ENCODE measurements at regions of chr1 and their contacts with region 1.

Region 1: DNA sequence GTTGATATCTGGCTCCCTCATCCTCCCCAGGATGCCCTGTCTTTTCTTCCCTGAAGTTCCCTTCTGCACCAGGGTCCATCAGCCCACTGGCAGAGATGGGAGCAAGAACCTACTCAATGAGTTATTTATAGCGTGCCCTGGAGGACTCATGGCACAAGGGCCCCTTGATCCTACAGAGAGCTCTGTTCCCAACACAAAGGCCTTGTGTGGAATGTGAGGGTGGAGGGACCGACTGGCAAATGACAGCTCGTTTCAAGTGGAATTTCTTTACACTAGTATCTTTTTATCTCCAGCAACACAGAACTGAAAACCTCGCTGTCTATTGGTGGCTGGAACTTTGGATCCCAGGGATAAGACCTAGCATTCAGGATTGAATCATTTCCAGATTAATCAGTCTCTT is 22.4 kb downstream of the CHI3L2 start:
- DNase-seq: no peak
- H3K4me3 ChIP-seq: no peak overlapping the region
- H3K27ac ChIP-seq: no peak overlapping the region
- H3K4me1 ChIP-seq: no peaks in the 10 kb centered on the region
- H3K27me3 ChIP-seq: no peaks in the 10 kb centered on the region
- CTCF ChIP-seq: no peak
- POLR2A ChIP-seq: no peak

Region 2: DNA sequence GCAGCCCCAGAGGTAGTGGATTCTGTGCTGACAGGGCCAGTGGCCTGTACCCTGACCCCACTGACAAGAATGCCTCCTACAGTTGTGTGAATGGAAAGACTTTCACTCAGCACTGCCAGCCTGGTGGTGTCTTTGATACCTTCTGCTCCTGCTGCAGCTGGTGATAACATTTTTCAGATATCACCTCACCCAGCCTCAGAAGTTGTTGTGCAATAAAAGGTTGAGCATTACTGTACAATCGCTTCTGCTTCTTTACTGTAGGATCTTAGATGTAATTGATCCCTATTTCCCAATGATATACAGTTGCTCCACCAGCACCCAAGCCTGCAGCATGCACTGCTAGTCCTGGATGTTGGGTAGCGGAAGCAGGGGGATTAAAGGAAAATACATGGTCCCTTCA is 35.9 kb after region 1 on chr1:
- intact Hi-C with region 1: loop called (anchors 1 kb)
- DNase-seq: no peak
- H3K4me3 ChIP-seq: no peak overlapping the region
- H3K27ac ChIP-seq: no peak overlapping the region
- H3K4me1 ChIP-seq: no peaks in the 10 kb centered on the region
- H3K27me3 ChIP-seq: no peaks in the 10 kb centered on the region
- CTCF ChIP-seq: no peak
- POLR2A ChIP-seq: no peak

Measured in breast epithelium (tissue), 4 donors.